GM13977 (cell line): ENCODE measurements at regions of chr19 and their contacts with region 1.

Region 1: GRCh38 chr19:18279516-18280273 is 1.7 kb downstream of the JUND start:
- DNase-seq: peak; percentile 98
- CTCF ChIP-seq: peak; percentile 89

Region 2: DNA sequence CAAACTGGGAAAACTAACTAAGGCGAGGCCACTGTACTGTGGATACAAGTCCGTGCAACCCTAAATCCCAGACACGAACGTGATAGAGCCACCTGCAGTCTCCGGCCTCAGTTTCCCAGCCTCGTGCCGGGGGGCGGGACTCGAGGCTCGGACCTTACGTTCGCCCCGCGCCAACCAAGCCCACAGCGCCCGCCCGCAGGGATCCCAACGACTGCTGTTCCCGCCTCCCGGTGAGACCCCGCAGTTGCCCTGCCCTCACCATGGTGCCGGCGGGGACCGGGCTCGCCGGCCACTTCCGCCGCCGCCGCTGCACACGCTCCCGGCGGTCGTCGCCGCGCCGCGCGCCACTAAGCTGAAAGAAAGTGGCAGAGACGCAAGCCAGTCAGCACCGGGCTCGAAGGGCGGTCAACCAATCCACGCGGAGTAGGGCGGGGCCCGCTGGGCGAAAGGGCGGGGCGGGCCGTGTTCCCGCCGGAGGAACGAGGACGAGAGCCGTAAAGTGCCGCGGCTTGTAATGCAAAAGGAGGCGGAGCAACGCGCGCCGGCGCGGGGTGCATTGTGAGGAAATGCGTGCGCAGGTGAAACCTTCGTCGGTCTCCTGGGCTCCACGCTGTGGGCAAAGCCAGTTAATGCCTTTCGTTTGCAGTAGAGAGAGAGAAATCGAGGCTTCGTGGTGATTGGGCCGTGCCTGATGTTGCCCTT is 43.2 kb after region 1 on chr19 and contains the start of gene LSM4:
- in situ Hi-C with region 1: loop called (anchors 5 kb)
- DNase-seq: peak; percentile 99
- CTCF ChIP-seq: peak; percentile 61